Naive thymus-derived CD4-positive, alpha-beta T cell (primary cell): ENCODE measurements at regions of chr15 and their contacts with region 1.

Region 1: DNA sequence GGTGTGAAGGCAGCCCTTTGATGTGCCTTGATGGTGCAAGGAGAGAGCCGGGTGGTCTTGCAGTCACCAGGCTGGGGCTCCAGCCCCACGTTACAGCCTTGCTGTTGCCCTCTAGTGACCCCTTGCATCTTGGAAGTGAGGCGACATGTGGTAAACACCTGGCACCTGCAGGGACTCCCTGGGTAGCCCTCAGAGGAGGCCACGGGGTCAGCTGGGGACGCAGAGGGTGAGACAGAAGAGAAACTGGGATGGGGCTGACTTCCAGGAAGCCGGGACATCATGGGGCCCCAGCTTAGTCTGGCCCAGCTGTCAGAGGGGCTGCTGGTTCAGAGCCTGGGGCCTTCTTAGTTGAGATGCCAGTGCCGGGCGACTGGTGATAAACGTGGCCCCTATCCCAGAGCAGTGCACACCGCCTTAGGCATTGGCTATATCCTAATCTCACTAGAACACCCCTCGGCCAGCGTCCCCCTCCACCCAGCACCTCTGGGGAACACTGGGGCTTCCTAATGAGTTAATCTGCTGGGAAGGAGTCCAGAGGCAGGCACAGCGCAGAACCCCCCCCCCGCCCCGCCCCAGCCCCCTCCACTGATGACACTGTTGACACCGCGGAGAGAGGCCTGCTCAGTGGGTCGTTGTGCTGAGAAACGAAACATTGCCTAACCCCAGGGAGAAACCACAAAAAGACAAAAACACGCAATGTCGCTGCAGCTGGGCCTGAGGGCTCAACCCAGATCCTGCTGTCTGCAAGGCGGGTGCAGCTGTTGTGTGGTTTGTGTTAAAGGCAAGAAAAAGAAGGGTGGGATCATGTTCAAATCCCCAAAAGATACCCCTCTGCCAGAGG is 60.5 kb upstream of the KLF13 start:
- DNase-seq: peak; percentile 43 to 90 (median 86)
- ATAC-seq: peak; percentile 84
- H3K4me3 ChIP-seq: peak overlapping the region; percentile 24
- H3K4me3 Mint-ChIP-seq: peak overlapping the region; percentile 71 to 95 (median 78)
- H3K27ac ChIP-seq: peak overlapping the region; percentile 81
- H3K27ac Mint-ChIP-seq: peak overlapping the region; percentile 94 to 100 (median 96)
- H3K4me1 ChIP-seq: peaks cover 48 to 88% of the 10 kb centered on the region in 2 donors
- H3K4me1 Mint-ChIP-seq: peaks cover 62 to 99% (median 96%) of the 10 kb centered on the region in 7 donors
- H3K27me3 ChIP-seq: no peaks in the 10 kb centered on the region
- H3K27me3 Mint-ChIP-seq: no peaks in the 10 kb centered on the region

Region 2: DNA sequence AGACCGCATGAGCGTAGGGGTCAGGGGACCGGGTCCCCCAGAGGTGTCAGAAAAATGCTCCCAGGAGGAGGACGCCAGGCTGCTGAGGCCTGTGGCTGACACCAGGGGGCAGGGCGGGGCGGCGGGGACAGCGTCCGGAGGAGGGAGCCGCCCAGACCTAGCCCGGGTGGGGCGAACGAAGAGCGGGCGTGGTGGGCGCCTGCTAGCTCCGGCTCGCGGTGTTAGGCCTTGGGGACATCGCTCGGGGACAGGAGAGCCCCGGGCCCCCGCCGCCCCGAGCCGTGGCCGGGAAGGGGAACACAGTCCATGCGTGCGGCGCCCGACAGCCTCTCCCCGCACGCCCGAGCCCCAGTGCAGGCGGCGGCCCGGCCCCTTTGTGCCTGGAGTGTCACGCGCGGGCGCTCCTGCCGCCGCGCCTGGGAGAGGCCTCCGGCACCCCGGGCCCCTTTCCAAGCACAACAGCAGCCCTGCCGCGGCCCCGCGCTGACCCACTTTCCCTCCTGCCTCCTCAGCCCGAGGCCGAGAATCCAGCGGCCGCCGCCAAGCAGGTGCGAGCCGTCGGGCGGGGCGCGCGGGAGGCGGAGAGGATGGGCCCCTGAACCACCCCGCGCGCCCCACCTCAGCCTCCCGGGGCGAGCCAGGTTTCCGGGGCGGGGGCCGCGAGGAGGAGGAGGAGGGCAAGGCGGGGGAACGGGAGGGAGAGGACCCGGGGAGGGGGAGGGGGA is 50.4 kb before region 1 on chr15:
- CTCF ChIA-PET with region 1: interaction called, 32 read pairs
- POLR2A ChIA-PET with region 1: interaction called, 26 read pairs
- intact Hi-C with region 1: loop called (anchors 1 to 2 kb)
- DNase-seq: peak; percentile 53 to 84 (median 69)
- ATAC-seq: peak; percentile 84
- H3K4me3 ChIP-seq: peak overlapping the region; percentile 30
- H3K4me3 Mint-ChIP-seq: peak overlapping the region; percentile 50 to 90 (median 74)
- H3K27ac ChIP-seq: peak overlapping the region; percentile 76
- H3K27ac Mint-ChIP-seq: peak overlapping the region; percentile 84 to 91 (median 87)
- H3K4me1 ChIP-seq: peaks cover 11 to 14% of the 10 kb centered on the region in 2 donors
- H3K4me1 Mint-ChIP-seq: peaks cover 5 to 54% (median 41%) of the 10 kb centered on the region in 7 donors
- H3K27me3 ChIP-seq: no peaks in the 10 kb centered on the region
- H3K27me3 Mint-ChIP-seq: no peaks in the 10 kb centered on the region

Region 3: DNA sequence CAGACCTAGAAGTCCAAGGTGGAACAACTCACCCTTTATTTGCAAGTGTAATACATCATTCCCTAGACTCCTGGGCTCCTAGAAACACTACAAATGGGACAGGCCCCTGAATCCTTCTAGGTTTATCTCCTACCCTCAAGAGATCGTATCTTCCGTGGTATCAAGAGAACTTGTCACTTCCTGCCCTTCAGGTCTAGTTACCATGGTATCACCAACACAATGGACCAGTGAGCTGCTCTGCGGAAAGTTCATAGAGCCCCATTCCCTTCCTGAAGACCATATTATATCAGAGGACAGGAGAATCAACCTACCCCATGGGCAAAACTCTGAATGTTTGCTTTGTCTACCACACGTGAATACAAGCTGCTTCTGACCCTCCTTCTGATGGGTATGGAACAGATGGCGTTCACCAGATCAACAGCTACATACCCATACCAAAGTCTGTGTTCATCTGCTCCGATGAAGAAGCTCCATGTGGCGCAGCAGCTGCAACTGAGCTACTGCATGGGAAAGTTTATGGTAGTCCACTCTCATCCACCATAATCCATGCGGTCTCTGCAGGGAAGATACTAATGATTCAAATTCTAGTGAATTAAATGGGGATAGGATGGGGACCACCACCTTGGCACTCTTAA is 24.1 kb before region 1 on chr15:
- CTCF ChIA-PET with region 1: interaction called, 6 read pairs
- POLR2A ChIA-PET with region 1: interaction called, 59 read pairs
- intact Hi-C with region 1: loop called in 1 of 2 experiments (anchors 1 kb)
- DNase-seq: peak in 5 of 9 donors; percentile 47 to 78 (median 65)
- ATAC-seq: peak; percentile 95
- H3K4me3 ChIP-seq: no peak overlapping the region
- H3K4me3 Mint-ChIP-seq: peak overlapping the region; percentile 2 to 74 (median 50)
- H3K27ac ChIP-seq: peak overlapping the region; percentile 32
- H3K27ac Mint-ChIP-seq: peak overlapping the region; percentile 36 to 97 (median 90)
- H3K4me1 ChIP-seq: peaks cover 13 to 28% of the 10 kb centered on the region in 2 donors
- H3K4me1 Mint-ChIP-seq: peaks cover 34 to 49% (median 42%) of the 10 kb centered on the region in 7 donors
- H3K27me3 ChIP-seq: no peaks in the 10 kb centered on the region
- H3K27me3 Mint-ChIP-seq: peaks cover 0 to 3% (median 0%) of the 10 kb centered on the region in 5 donors

Region 4: DNA sequence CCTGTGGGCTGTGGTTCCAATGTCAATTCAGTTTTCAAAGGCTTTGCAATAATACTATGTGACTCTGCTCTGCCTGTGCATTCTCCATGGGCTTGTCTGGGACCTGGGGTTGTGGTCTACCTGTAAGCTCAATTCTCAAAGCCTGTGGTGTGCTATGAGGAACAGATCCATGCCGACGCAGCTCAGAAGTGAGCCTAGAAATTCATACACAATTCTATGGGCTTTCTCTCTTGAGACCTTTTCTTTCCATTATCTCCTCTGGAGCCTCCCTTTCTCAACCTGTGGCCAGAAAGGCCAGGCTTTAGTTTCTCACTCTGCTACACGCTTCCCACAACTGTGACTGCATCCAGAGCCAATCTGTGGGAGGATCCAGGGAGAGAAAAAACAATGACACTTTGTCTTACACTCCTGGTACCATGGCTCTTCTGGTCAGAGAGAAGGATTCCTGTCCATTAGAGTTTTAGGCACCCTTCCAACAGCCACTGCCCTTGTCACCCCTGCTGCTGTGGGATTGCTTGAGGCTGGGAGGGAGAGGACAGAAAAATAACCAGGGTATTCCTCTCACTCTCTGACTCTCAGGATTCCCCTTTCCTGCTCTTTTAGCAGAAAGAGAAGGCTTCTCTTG is 26.4 kb after region 1 on chr15:
- CTCF ChIA-PET with region 1: interaction called, 3 read pairs
- POLR2A ChIA-PET with region 1: interaction called, 3 read pairs
- intact Hi-C with region 1: loop called in 1 of 2 experiments (anchors 2 kb)
- DNase-seq: no peak
- ATAC-seq: no peak
- H3K4me3 ChIP-seq: no peak overlapping the region
- H3K4me3 Mint-ChIP-seq: no peak overlapping the region
- H3K27ac ChIP-seq: no peak overlapping the region
- H3K27ac Mint-ChIP-seq: no peak overlapping the region
- H3K4me1 ChIP-seq: no peaks in the 10 kb centered on the region
- H3K4me1 Mint-ChIP-seq: peaks cover 0 to 25% (median 3%) of the 10 kb centered on the region in 7 donors
- H3K27me3 ChIP-seq: no peaks in the 10 kb centered on the region
- H3K27me3 Mint-ChIP-seq: peaks cover 0 to 72% (median 0%) of the 10 kb centered on the region in 5 donors

Region 5: GRCh38 chr15:31352911-31353811 is 87.1 kb after region 1 on chr15:
- CTCF ChIA-PET with region 1: interaction called, 3 read pairs
- POLR2A ChIA-PET with region 1: interaction called, 22 read pairs
- intact Hi-C with region 1: no loop called
- DNase-seq: peak in 7 of 9 donors; percentile 49 to 68 (median 59)
- ATAC-seq: peak; percentile 68
- H3K4me3 ChIP-seq: peak overlapping the region; percentile 47
- H3K4me3 Mint-ChIP-seq: peak overlapping the region; percentile 80 to 88 (median 84)
- H3K27ac ChIP-seq: peak overlapping the region; percentile 94
- H3K27ac Mint-ChIP-seq: peak overlapping the region; percentile 92 to 99 (median 97)
- H3K4me1 ChIP-seq: peaks cover 96 to 99% of the 10 kb centered on the region in 2 donors
- H3K4me1 Mint-ChIP-seq: peaks cover 79 to 100% (median 94%) of the 10 kb centered on the region in 7 donors
- H3K27me3 ChIP-seq: no peaks in the 10 kb centered on the region
- H3K27me3 Mint-ChIP-seq: no peaks in the 10 kb centered on the region